ENCODE measurements at regions of chr1 and their contacts with region 1.

Region 1: GRCh38 chr1:6475381-6476133 is 9.6 kb upstream of the TNFRSF25 start:
- DNase-seq: peak; percentile 82 to 96 (median 94)
- ATAC-seq: peak; percentile 80
- H3K4me3 ChIP-seq: no peak overlapping the region
- H3K27ac ChIP-seq: no peak overlapping the region
- H3K4me1 ChIP-seq: peaks cover 10 to 51% of the 10 kb centered on the region in 2 experiments; a peak in 4 of 5 replicates
- H3K27me3 ChIP-seq: peaks cover 34 to 75% of the 10 kb centered on the region in 2 experiments
- CTCF ChIP-seq: peak; percentile 87 to 99 (median 95)
- EP300 ChIP-seq: no peak
- POLR2A ChIP-seq: no peak
- RAD21 ChIP-seq: peak in 1 of 2 experiments; percentile 69; a peak in 2 of 4 replicates

Region 2: DNA sequence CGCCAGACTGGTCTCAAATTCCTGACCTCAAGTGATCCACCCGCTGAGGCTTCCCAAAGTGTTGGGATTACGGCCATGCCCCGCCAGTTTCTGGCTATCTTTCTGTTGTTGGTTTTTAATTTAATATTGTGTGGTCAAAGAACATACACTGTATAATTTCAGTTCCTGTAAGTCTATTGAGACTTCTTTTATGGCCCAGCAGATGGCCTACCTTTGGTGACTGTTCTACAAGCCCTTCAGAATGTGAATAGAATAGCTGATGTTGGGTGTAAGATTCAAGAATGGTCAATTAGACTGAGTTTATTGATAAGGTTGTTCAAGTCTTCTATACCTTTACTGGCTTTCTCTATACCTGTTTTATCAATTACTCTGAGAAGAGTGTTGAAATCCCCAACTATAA is 66.5 kb before region 1 on chr1:
- CTCF ChIA-PET with region 1: no interaction called
- POLR2A ChIA-PET with region 1: no interaction called
- in situ Hi-C with region 1: loop called (anchors 5 kb)
- intact Hi-C with region 1: loop called (anchors 5 kb)
- DNase-seq: no peak
- ATAC-seq: no peak
- H3K4me3 ChIP-seq: no peak overlapping the region
- H3K27ac ChIP-seq: no peak overlapping the region
- H3K4me1 ChIP-seq: peaks cover 0 to 9% of the 10 kb centered on the region in 2 experiments; a peak in 1 of 5 replicates
- H3K27me3 ChIP-seq: peaks cover 24 to 45% of the 10 kb centered on the region in 2 experiments
- CTCF ChIP-seq: 0 out of 6 replicates have a peak, but pooled peaks of 1 of the 3 experiments have one; percentile 5
- EP300 ChIP-seq: no peak
- POLR2A ChIP-seq: no peak
- RAD21 ChIP-seq: 0 out of 4 replicates have a peak, but pooled peaks of 1 of the 2 experiments have one; percentile 12

Region 3: GRCh38 chr1:6414443-6414844 is 61.1 kb before region 1 on chr1:
- CTCF ChIA-PET with region 1: no interaction called
- POLR2A ChIA-PET with region 1: no interaction called
- in situ Hi-C with region 1: loop called (anchors 5 kb)
- intact Hi-C with region 1: loop called (anchors 5 kb)
- DNase-seq: peak; percentile 78 to 85 (median 81)
- ATAC-seq: peak; percentile 95
- H3K4me3 ChIP-seq: no peak overlapping the region
- H3K27ac ChIP-seq: no peak overlapping the region
- H3K4me1 ChIP-seq: peaks cover 0 to 15% of the 10 kb centered on the region in 2 experiments; a peak in 2 of 5 replicates
- H3K27me3 ChIP-seq: peaks cover 53 to 84% of the 10 kb centered on the region in 2 experiments
- CTCF ChIP-seq: peak; percentile 82 to 93 (median 86)
- EP300 ChIP-seq: no peak
- POLR2A ChIP-seq: no peak
- RAD21 ChIP-seq: peak in 1 of 2 experiments; percentile 46; a peak in 2 of 4 replicates